B cell (primary cell): ENCODE measurements at regions of chr2 and their contacts with region 1.

Region 1: GRCh38 chr2:169528271-169528701 is 18.8 kb downstream of the KLHL41 start:
- DNase-seq: peak; percentile 78
- ATAC-seq: peak; percentile 78
- H3K4me3 ChIP-seq: no peak overlapping the region
- H3K4me3 Mint-ChIP-seq: no peak overlapping the region
- H3K27ac ChIP-seq: peak overlapping the region in 1 of 2 donors; percentile 23
- H3K27ac Mint-ChIP-seq: no peak overlapping the region
- H3K4me1 ChIP-seq: no peaks in the 10 kb centered on the region
- H3K4me1 Mint-ChIP-seq: no peaks in the 10 kb centered on the region
- H3K27me3 ChIP-seq: no peaks in the 10 kb centered on the region
- H3K27me3 Mint-ChIP-seq: no peaks in the 10 kb centered on the region
- CTCF ChIP-seq: peak; percentile 87

Region 2: GRCh38 chr2:168948621-168949212 is 579.6 kb before region 1 on chr2:
- CTCF ChIA-PET with region 1: no interaction called
- POLR2A ChIA-PET with region 1: no interaction called
- intact Hi-C with region 1: no loop called
- DNase-seq: peak; percentile 14
- ATAC-seq: no peak
- H3K4me3 ChIP-seq: no peak overlapping the region
- H3K4me3 Mint-ChIP-seq: no peak overlapping the region
- H3K27ac ChIP-seq: no peak overlapping the region
- H3K27ac Mint-ChIP-seq: no peak overlapping the region
- H3K4me1 ChIP-seq: no peaks in the 10 kb centered on the region
- H3K4me1 Mint-ChIP-seq: no peaks in the 10 kb centered on the region
- H3K27me3 ChIP-seq: no peaks in the 10 kb centered on the region
- H3K27me3 Mint-ChIP-seq: no peaks in the 10 kb centered on the region
- CTCF ChIP-seq: peak; percentile 78

Region 3: GRCh38 chr2:169676357-169676756 is 148.1 kb after region 1 on chr2:
- CTCF ChIA-PET with region 1: interaction called, 3 read pairs
- POLR2A ChIA-PET with region 1: no interaction called
- intact Hi-C with region 1: loop called (anchors 1 kb)
- DNase-seq: no peak
- ATAC-seq: no peak
- H3K4me3 ChIP-seq: no peak overlapping the region
- H3K4me3 Mint-ChIP-seq: no peak overlapping the region
- H3K27ac ChIP-seq: no peak overlapping the region
- H3K27ac Mint-ChIP-seq: no peak overlapping the region
- H3K4me1 ChIP-seq: no peaks in the 10 kb centered on the region
- H3K4me1 Mint-ChIP-seq: no peaks in the 10 kb centered on the region
- H3K27me3 ChIP-seq: peaks cover 0 to 5% (median 0%) of the 10 kb centered on the region in 4 experiments
- H3K27me3 Mint-ChIP-seq: peaks cover 33% of the 10 kb centered on the region
- CTCF ChIP-seq: peak; percentile 28

Region 4: DNA sequence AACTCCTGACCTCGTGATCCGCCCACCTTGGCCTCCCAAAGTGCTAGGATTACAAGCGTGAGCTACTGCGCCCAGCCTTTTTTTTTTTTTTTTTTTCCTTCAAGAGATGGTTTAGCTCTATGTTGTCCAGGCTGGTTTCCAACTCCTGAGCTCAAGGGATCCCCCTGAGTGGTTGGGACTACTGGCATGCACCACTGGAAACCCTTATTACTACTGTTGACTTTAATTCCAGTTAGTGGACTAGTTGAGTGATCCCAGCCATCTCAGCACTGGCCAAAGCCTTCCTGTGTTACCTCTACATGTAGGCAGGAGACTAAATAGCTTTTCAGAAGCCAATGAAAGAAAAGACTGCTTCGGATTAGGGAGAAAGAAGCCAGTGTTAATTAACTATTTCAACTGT is 262.3 kb after region 1 on chr2:
- CTCF ChIA-PET with region 1: interaction called, 3 read pairs
- POLR2A ChIA-PET with region 1: no interaction called
- intact Hi-C with region 1: loop called (anchors 2 kb)
- DNase-seq: no peak
- ATAC-seq: no peak
- H3K4me3 ChIP-seq: no peak overlapping the region
- H3K4me3 Mint-ChIP-seq: no peak overlapping the region
- H3K27ac ChIP-seq: no peak overlapping the region
- H3K27ac Mint-ChIP-seq: no peak overlapping the region
- H3K4me1 ChIP-seq: peaks cover 5 to 7% of the 10 kb centered on the region in 2 donors
- H3K4me1 Mint-ChIP-seq: peaks cover 6% of the 10 kb centered on the region
- H3K27me3 ChIP-seq: peaks cover 0 to 14% (median 0%) of the 10 kb centered on the region in 4 experiments
- H3K27me3 Mint-ChIP-seq: peaks cover 21% of the 10 kb centered on the region
- CTCF ChIP-seq: no peak

Region 5: GRCh38 chr2:169877398-169877797 is 349.1 kb after region 1 on chr2:
- CTCF ChIA-PET with region 1: interaction called, 6 read pairs
- POLR2A ChIA-PET with region 1: no interaction called
- intact Hi-C with region 1: loop called (anchors 1 kb)
- DNase-seq: peak; percentile 8
- ATAC-seq: no peak
- H3K4me3 ChIP-seq: no peak overlapping the region
- H3K4me3 Mint-ChIP-seq: no peak overlapping the region
- H3K27ac ChIP-seq: no peak overlapping the region
- H3K27ac Mint-ChIP-seq: no peak overlapping the region
- H3K4me1 ChIP-seq: no peaks in the 10 kb centered on the region
- H3K4me1 Mint-ChIP-seq: no peaks in the 10 kb centered on the region
- H3K27me3 ChIP-seq: no peaks in the 10 kb centered on the region
- H3K27me3 Mint-ChIP-seq: no peaks in the 10 kb centered on the region
- CTCF ChIP-seq: no peak

Region 6: DNA sequence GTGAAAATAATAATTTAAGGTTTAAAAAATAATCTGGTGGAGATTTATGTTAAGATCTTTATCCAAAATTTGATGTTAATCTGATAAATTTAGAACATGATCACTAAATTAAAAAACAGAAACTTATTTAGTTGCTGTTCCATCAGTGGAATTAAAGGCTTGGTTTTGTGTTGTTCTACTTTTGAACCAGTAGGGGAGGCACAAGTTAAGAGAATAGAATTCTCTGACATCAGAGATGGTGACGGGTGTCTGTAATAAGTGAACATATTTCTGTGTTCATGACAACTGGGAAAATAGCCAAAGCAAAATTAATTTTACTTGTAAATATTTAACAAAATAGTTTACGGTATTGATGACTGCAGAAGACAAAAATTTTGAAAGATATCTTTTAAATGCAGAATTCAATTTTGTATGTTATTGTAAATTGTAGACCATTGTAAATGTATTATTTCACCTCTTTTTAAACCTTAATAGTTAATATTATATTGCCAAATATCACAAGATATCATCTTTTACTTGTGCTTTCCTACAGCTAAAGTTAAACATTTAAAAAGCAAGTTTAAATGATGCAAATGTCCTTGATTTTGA is 404.9 kb after region 1 on chr2:
- CTCF ChIA-PET with region 1: interaction called, 13 read pairs
- POLR2A ChIA-PET with region 1: no interaction called
- intact Hi-C with region 1: loop called (anchors 1 kb)
- DNase-seq: peak; percentile 19
- ATAC-seq: peak; percentile 28
- H3K4me3 ChIP-seq: no peak overlapping the region
- H3K4me3 Mint-ChIP-seq: no peak overlapping the region
- H3K27ac ChIP-seq: no peak overlapping the region
- H3K27ac Mint-ChIP-seq: no peak overlapping the region
- H3K4me1 ChIP-seq: no peaks in the 10 kb centered on the region
- H3K4me1 Mint-ChIP-seq: no peaks in the 10 kb centered on the region
- H3K27me3 ChIP-seq: no peaks in the 10 kb centered on the region
- H3K27me3 Mint-ChIP-seq: no peaks in the 10 kb centered on the region
- CTCF ChIP-seq: peak; percentile 75

Region 7: GRCh38 chr2:170122883-170123584 is 594.7 kb after region 1 on chr2:
- CTCF ChIA-PET with region 1: no interaction called
- POLR2A ChIA-PET with region 1: no interaction called
- intact Hi-C with region 1: no loop called
- DNase-seq: no peak
- ATAC-seq: no peak
- H3K4me3 ChIP-seq: no peak overlapping the region
- H3K4me3 Mint-ChIP-seq: no peak overlapping the region
- H3K27ac ChIP-seq: no peak overlapping the region
- H3K27ac Mint-ChIP-seq: no peak overlapping the region
- H3K4me1 ChIP-seq: no peaks in the 10 kb centered on the region
- H3K4me1 Mint-ChIP-seq: no peaks in the 10 kb centered on the region
- H3K27me3 ChIP-seq: no peaks in the 10 kb centered on the region
- H3K27me3 Mint-ChIP-seq: peaks cover 13% of the 10 kb centered on the region
- CTCF ChIP-seq: no peak